Activated naive CD4-positive, alpha-beta T cell treated with anti-CD3 and anti-CD28 coated beads for 36 hours (primary cell): ENCODE measurements at regions of chr10 and their contacts with region 1.

Region 1: DNA sequence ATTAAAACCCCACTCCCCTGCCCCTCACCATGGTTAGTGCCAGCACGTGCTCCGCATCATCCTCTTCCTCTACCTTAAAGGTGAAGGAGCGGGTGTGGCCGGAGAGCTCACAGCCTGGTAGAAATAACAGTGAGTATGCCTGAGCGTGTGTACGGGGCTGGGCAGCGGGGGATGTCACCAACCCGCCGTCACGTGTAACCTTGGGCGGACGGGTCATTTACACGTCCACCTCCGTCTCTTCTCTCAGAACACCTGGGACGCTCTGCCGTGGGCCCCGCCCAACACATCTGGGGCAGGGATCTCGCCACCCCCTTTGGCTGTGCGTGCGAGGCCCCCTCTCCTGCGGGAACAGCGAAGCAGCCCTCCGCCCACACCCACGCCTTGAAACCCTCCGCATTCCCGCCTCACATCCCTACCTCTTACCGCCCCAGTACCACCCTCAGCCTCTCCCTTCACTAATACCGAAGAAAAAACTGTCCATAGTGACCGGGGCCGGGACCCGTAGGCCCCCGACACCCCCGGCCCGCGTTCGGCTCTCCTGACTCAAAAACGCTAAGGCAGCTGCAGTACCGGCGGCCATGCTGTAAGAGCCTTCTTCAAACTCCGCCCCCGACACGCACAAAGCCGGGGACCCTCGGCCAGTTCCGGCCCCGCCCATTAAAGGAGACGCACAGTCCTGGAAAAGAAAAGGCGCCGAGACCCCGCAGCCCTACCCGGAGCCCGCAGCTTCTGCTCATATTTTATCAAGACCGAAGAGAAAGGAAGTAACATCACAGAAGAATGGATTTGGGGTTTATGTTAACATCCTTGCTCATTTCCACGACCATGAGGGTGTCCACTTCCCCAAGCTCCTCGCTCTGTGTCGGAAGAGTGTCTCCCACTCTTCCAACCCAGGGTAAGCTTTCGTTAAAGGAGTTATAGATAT is at the start of gene NPM3:
- DNase-seq: peak; percentile 94
- H3K4me3 Mint-ChIP-seq: peak within 1 kb of the TSS; percentile 100
- H3K27ac Mint-ChIP-seq: peak within 1 kb of the TSS; percentile 97
- H3K4me1 Mint-ChIP-seq: peaks cover 57% of the 10 kb centered on the region
- H3K27me3 Mint-ChIP-seq: peaks cover 9% of the 10 kb centered on the region
- total RNA-seq, gene NPM3: 213 to 230 TPM

Region 2: GRCh38 chr10:101214446-101215396 is 568.4 kb before region 1 on chr10:
- CTCF ChIA-PET with region 1: interaction called, 5 read pairs
- intact Hi-C with region 1: loop called (anchors 2 kb)
- DNase-seq: peak; percentile 81
- H3K4me3 Mint-ChIP-seq: peak overlapping the region; percentile 55
- H3K27ac Mint-ChIP-seq: no peak overlapping the region
- H3K4me1 Mint-ChIP-seq: peaks cover 32% of the 10 kb centered on the region
- H3K27me3 Mint-ChIP-seq: peaks cover 72% of the 10 kb centered on the region

Region 3: GRCh38 chr10:101552442-101552841 is 230.6 kb before region 1 on chr10:
- CTCF ChIA-PET with region 1: no interaction called
- intact Hi-C with region 1: no loop called
- DNase-seq: no peak
- H3K4me3 Mint-ChIP-seq: no peak overlapping the region
- H3K27ac Mint-ChIP-seq: no peak overlapping the region
- H3K4me1 Mint-ChIP-seq: peaks cover 2% of the 10 kb centered on the region
- H3K27me3 Mint-ChIP-seq: no peaks in the 10 kb centered on the region

Region 4: DNA sequence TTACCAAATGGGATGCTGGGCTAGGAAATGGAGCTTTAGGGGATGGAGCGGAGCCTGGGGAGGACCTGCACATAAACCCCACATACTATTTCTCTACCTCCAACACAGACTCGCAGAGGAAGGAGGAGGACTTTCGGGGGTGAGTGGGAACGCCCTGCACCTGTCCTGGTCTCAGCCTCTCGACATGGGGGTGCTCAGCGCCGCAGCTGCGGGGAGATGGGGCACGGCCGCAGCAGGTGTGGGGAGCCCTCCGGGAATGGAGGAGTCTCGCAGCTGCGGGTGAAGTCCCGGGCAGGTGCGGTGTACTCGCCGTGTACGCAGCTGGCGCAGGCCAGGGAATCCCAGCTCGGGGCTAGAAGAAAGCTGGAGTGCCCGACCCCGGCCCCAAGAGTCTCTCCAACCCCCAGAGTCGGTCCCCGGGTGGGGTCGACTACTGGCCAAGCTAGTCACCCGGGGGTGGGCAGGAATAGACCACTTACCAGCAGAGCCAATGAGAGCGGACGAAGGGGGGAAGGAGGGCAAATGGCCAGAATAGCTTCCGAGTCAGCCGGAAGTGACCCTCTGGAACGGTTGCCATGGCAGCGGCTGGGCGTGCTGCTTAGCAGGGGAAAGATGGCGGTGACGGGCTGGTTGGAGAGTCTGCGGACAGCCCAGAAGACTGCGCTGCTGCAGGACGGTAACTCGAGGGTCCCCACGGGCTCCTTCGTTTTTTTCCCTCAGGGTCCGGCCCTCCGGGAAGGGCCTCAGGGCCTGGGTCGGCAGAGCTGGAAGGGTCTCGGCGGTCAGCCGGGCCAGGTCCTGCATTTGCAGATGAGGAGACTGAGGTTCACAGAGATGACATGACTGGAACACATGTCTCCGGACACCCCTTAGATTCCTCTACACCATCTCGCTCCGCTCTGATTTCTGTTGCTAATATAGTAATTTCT is 195.1 kb before region 1 on chr10 and contains the starts of genes DPCD and POLL:
- CTCF ChIA-PET with region 1: interaction called, 8 read pairs
- intact Hi-C with region 1: loop called (anchors 1 kb)
- DNase-seq: peak; percentile 97
- H3K4me3 Mint-ChIP-seq: peak within 1 kb of the TSS; percentile 91
- H3K27ac Mint-ChIP-seq: peak within 1 kb of the TSS; percentile 78
- H3K4me1 Mint-ChIP-seq: peaks cover 21% of the 10 kb centered on the region
- H3K27me3 Mint-ChIP-seq: no peaks in the 10 kb centered on the region
- total RNA-seq, gene DPCD: 13.8 to 14.1 TPM
- total RNA-seq, gene POLL: 28.1 to 29.0 TPM

Region 5: DNA sequence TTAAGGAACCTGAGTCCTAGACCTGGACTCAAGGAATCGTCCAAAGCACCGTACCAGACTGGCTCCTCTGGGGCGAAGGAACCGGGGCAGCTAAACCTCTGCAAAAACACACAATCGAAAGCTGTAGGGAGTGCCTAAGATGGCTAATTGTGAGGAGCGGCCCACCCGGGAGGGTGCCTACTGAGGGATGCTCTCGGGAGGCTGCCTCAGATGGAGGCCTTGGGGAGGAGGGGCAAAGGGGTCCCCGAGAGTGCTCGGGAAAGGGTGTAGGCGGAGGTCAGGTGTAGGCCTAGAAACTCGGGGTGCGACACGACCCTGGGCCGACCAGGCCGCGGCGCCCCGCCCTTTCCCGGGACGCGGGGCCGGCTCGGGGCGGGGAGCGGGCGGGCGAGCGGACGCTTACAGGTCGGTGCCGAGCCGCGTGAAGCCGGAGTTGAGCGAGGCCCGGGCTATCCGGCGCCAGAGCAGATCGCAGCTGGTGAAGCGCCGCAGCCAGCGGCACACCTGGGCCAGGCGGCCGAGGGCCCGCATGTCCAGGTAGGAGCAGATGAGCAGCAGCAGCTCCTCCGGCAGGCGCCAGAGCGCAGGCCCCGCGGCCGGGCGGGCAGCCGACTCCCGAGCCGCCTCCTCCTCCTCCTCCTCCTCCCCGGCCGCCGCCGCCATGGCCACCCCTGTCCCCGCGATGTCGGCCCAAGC is 88.9 kb before region 1 on chr10:
- CTCF ChIA-PET with region 1: interaction called, 5 read pairs
- intact Hi-C with region 1: loop called (anchors 2 kb)
- DNase-seq: peak; percentile 56
- H3K4me3 Mint-ChIP-seq: peak overlapping the region; percentile 97
- H3K27ac Mint-ChIP-seq: peak overlapping the region; percentile 97
- H3K4me1 Mint-ChIP-seq: peaks cover 38% of the 10 kb centered on the region
- H3K27me3 Mint-ChIP-seq: no peaks in the 10 kb centered on the region

Region 6: GRCh38 chr10:101797403-101798059 is 14.5 kb after region 1 on chr10:
- CTCF ChIA-PET with region 1: interaction called, 16 read pairs
- intact Hi-C with region 1: no loop called
- DNase-seq: no peak
- H3K4me3 Mint-ChIP-seq: no peak overlapping the region
- H3K27ac Mint-ChIP-seq: no peak overlapping the region
- H3K4me1 Mint-ChIP-seq: peaks cover 18% of the 10 kb centered on the region
- H3K27me3 Mint-ChIP-seq: no peaks in the 10 kb centered on the region

Region 7: DNA sequence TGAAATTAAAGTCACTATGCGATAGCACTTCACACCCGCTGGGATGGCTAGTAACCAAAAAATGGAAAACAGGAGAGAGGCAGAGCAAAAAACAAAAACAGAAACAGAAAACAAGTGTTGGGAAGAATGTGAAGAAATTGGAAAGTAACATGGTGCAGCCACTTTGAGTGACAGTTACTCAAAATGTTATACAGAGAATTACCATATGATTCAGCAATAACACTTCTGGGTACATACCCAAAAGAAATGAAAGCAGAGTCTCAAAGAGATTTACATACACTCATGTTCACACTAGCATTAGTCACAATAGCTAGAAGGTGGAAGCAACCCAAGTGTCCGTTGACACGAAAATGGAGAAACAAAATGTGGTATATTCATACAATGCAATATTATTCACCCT is 149.1 kb after region 1 on chr10:
- CTCF ChIA-PET with region 1: no interaction called
- intact Hi-C with region 1: no loop called
- DNase-seq: peak; percentile 31
- H3K4me3 Mint-ChIP-seq: no peak overlapping the region
- H3K27ac Mint-ChIP-seq: no peak overlapping the region
- H3K4me1 Mint-ChIP-seq: peaks cover 12% of the 10 kb centered on the region
- H3K27me3 Mint-ChIP-seq: no peaks in the 10 kb centered on the region

Region 8: GRCh38 chr10:102064868-102065560 is 281.9 kb after region 1 on chr10 and contains the start of gene HPS6:
- CTCF ChIA-PET with region 1: interaction called, 3 read pairs
- intact Hi-C with region 1: loop called (anchors 2 kb)
- DNase-seq: peak; percentile 91
- H3K4me3 Mint-ChIP-seq: peak within 1 kb of the TSS; percentile 83
- H3K27ac Mint-ChIP-seq: peak within 1 kb of the TSS; percentile 88
- H3K4me1 Mint-ChIP-seq: peaks cover 24% of the 10 kb centered on the region
- H3K27me3 Mint-ChIP-seq: no peaks in the 10 kb centered on the region
- total RNA-seq, gene HPS6: 8.7 to 8.8 TPM